ENCODE measurements at regions of chr18 and their contacts with region 1.

Region 1: DNA sequence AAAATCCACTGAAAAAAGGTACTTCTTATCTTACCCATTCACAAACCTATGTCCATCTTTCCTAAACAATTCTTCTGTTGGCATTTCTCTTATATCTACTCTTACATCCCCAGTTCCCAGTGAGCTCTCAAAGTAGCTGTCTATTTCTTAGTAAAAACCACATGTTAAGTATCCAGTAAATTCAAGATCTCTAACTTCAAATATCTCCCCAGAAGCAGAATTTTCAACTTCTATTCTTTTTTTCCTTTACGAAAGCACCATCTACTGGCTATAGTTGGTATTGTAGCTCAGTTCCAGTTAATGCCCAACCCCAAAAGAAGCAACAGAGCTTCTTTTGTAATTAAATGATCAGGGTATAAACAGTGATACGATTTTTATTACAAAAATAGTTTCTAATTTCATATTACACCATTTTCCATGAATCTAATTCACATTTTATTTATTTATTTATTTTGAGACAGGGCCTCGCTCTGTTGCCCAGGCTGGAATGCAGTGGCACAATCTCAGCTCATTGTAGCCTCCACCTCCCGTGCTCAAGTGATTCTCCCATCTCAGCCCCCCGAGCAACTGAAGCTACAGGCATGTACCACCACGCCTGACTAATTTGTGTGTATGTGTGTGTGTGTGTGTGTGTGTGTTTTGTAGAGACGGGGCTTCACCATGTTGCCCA is 28.5 kb downstream of the HRH4 start:
- DNase-seq: no peak
- H3K4me3 ChIP-seq: no peak overlapping the region
- H3K27ac ChIP-seq: no peak overlapping the region
- H3K4me1 ChIP-seq: no peaks in the 10 kb centered on the region
- H3K27me3 ChIP-seq: no peaks in the 10 kb centered on the region
- CTCF ChIP-seq: peak in 2 of 3 experiments; percentile 40 to 50; a peak in 2 of 4 replicates
- EP300 ChIP-seq: no peak
- POLR2A ChIP-seq: no peak
- RAD21 ChIP-seq: peak; percentile 67

Region 2: DNA sequence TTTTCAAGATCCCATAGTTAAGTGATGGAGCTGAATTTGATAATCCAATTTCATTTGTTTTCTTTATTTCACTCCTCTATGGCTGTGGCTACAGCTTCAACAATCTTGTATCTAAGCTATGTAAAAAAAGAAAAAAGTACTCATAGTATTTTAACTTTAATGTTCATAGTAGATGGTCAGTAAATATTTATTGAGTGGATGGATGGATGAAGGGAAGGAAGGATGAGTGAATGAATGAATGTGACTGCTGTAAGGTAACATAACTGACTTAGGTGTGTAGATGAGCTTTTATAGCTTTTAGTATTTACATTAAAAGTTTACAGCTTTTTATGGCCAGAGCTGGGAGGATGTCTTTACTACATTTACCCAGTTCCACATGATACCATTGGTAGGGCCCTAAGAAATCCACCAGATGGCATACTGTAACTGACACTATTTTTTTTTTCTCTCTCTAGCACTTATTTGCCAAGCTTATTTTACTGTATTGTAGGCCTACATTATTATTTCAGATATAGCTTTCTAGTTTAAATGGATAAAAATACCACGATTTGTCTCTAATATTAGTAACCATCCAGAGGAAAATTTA is 41.9 kb before region 1 on chr18:
- CTCF ChIA-PET with region 1: interaction called, 11 read pairs
- POLR2A ChIA-PET with region 1: no interaction called
- DNase-seq: no peak
- H3K4me3 ChIP-seq: no peak overlapping the region
- H3K27ac ChIP-seq: no peak overlapping the region
- H3K4me1 ChIP-seq: no peaks in the 10 kb centered on the region
- H3K27me3 ChIP-seq: no peaks in the 10 kb centered on the region
- CTCF ChIP-seq: peak in 2 of 3 experiments; percentile 11 to 18; a peak in 2 of 4 replicates
- EP300 ChIP-seq: no peak
- POLR2A ChIP-seq: no peak
- RAD21 ChIP-seq: peak; percentile 18 to 23; a peak in 3 of 4 replicates

Region 3: DNA sequence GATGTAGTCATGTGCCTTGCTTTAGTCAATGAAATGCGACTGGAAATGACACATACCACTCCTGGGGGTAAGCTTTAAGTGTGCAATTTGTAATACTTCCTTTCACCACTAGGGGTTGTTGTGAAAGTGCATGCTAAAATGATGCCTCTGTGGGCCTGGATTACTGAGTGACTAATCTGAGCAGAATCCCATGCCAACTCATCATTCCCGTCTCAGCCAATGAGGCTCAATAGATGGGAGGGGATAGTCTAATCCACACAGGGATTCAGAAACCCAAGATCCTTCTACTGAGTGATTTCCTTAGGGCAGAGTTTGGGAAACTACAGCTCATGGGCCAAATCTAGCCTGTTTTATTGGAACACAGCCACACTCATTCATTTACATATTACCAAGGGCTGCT is 25.5 kb after region 1 on chr18:
- CTCF ChIA-PET with region 1: interaction called, 19 read pairs
- POLR2A ChIA-PET with region 1: no interaction called
- DNase-seq: peak in 1 of 2 experiments; percentile 29
- H3K4me3 ChIP-seq: no peak overlapping the region
- H3K27ac ChIP-seq: no peak overlapping the region
- H3K4me1 ChIP-seq: no peaks in the 10 kb centered on the region
- H3K27me3 ChIP-seq: no peaks in the 10 kb centered on the region
- CTCF ChIP-seq: peak in 2 of 3 experiments; percentile 28 to 77; a peak in 2 of 4 replicates
- EP300 ChIP-seq: no peak
- POLR2A ChIP-seq: no peak
- RAD21 ChIP-seq: peak; percentile 28 to 40

Region 4: GRCh38 chr18:24543805-24544498 is 55.0 kb after region 1 on chr18:
- CTCF ChIA-PET with region 1: interaction called, 11 read pairs
- POLR2A ChIA-PET with region 1: no interaction called
- DNase-seq: no peak
- H3K4me3 ChIP-seq: no peak overlapping the region
- H3K27ac ChIP-seq: no peak overlapping the region
- H3K4me1 ChIP-seq: no peaks in the 10 kb centered on the region
- H3K27me3 ChIP-seq: no peaks in the 10 kb centered on the region
- CTCF ChIP-seq: peak in 2 of 3 experiments; percentile 49 to 59; a peak in 3 of 4 replicates
- EP300 ChIP-seq: no peak
- POLR2A ChIP-seq: no peak
- RAD21 ChIP-seq: peak; percentile 86 to 88

Region 5: GRCh38 chr18:24726727-24727492 is 238.0 kb after region 1 on chr18:
- CTCF ChIA-PET with region 1: interaction called, 17 read pairs
- POLR2A ChIA-PET with region 1: no interaction called
- DNase-seq: peak in 1 of 2 experiments; percentile 71
- H3K4me3 ChIP-seq: no peak overlapping the region
- H3K27ac ChIP-seq: no peak overlapping the region
- H3K4me1 ChIP-seq: no peaks in the 10 kb centered on the region; a peak in 1 of 7 replicates
- H3K27me3 ChIP-seq: no peaks in the 10 kb centered on the region
- CTCF ChIP-seq: peak; percentile 50 to 85 (median 80)
- EP300 ChIP-seq: no peak
- POLR2A ChIP-seq: no peak
- RAD21 ChIP-seq: peak; percentile 93 to 95